ENCODE measurements at regions of chr4 and their contacts with region 1.

Region 1: GRCh38 chr4:10157478-10158332 is 41.1 kb upstream of the WDR1 start:
- DNase-seq: peak; percentile 60
- ATAC-seq: peak; percentile 73
- H3K4me3 Mint-ChIP-seq: no peak overlapping the region
- H3K27ac Mint-ChIP-seq: no peak overlapping the region
- H3K4me1 Mint-ChIP-seq: peaks cover 30% of the 10 kb centered on the region
- H3K27me3 Mint-ChIP-seq: no peaks in the 10 kb centered on the region
- CTCF ChIP-seq: peak; percentile 79

Region 2: DNA sequence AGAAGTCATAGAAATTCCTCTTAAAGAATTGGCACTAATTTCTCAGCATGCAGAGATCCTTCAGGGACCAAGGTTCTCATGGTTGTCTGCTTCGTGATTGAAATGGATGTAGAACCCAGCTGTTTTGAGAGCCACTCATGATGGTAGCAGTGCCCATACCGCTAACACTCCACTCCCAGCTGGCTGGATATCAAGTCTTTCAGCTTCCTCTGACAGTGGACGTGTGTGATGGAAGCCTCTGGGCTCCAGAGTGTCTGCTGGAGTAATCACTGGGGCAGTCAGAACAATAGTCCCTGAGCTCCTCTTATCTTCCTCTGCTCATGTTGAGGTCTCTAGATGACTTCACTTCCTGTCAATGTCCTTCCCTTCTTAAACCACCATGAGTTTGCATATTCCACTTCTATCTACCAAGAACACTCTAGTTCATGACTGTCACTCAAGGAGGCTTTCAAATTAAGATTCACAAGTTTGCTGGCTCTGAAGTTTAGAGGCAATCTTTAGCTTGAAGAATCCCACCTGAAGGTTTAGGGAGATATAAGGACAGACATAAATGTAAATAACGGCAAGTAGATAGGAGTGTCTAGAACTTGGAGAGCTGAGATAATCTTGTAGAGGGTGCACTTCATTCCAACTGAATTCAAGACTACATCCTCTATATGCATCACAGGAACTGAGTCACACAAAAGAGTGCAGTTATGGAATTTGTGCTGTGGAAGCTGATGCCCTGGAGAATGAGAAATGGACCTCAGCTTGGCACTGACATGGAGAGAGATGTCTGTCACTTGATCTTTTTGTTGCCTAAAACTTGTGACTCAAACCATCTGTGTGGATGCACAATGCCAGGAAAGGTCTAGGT is 23.4 kb after region 1 on chr4:
- CTCF ChIA-PET with region 1: interaction called, 11 read pairs
- POLR2A ChIA-PET with region 1: interaction called, 3 read pairs
- intact Hi-C with region 1: no loop called
- DNase-seq: peak; percentile 61
- ATAC-seq: peak; percentile 94
- H3K4me3 Mint-ChIP-seq: peak overlapping the region; percentile 16
- H3K27ac Mint-ChIP-seq: peak overlapping the region; percentile 93
- H3K4me1 Mint-ChIP-seq: peaks cover 32% of the 10 kb centered on the region
- H3K27me3 Mint-ChIP-seq: no peaks in the 10 kb centered on the region
- CTCF ChIP-seq: no peak

Region 3: DNA sequence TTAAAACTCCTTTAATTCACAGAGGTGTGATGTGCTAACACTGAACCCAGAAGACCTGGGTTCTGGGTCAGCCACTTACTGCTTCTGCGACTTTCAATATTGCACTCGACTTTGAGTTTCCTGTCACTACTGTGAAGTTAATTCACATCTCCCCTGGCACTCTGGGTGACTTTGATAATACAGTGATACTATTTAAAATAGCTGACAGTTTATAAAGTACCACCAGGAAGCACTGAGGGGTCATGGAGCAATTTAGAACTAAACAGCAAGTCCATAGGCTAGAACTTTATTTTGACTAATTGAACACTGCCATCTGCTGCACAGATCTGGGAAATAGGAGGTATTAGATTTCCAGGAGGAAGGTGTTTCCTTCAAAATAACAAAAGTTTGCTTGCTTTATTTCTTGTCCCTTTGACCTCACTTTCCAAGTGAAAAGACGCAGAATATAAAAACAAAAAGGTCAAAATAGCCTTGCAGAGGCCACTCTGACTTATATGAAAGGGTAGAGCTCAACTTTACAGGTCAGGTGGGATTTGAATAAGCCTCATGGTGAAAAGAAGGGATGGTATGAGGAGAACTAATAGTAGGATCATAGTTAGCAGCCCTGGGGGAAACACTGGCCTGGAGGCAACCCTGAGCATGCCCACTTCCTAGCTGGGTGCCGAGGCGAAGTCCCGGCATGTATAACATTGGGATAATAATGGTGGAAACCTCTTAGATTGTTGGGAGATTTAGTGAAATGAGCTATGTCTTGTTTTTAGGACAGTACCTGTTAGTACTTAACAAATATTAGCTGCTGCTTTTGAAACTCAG is 246.1 kb after region 1 on chr4:
- CTCF ChIA-PET with region 1: interaction called, 24 read pairs
- POLR2A ChIA-PET with region 1: no interaction called
- intact Hi-C with region 1: loop called (anchors 2 kb)
- DNase-seq: peak; percentile 17
- ATAC-seq: no peak
- H3K4me3 Mint-ChIP-seq: no peak overlapping the region
- H3K27ac Mint-ChIP-seq: no peak overlapping the region
- H3K4me1 Mint-ChIP-seq: no peaks in the 10 kb centered on the region
- H3K27me3 Mint-ChIP-seq: no peaks in the 10 kb centered on the region
- CTCF ChIP-seq: peak; percentile 72

Region 4: GRCh38 chr4:10506077-10506476 is 348.4 kb after region 1 on chr4:
- CTCF ChIA-PET with region 1: no interaction called
- POLR2A ChIA-PET with region 1: no interaction called
- intact Hi-C with region 1: no loop called
- DNase-seq: no peak
- ATAC-seq: no peak
- H3K4me3 Mint-ChIP-seq: no peak overlapping the region
- H3K27ac Mint-ChIP-seq: no peak overlapping the region
- H3K4me1 Mint-ChIP-seq: peaks cover 5% of the 10 kb centered on the region
- H3K27me3 Mint-ChIP-seq: no peaks in the 10 kb centered on the region
- CTCF ChIP-seq: no peak

Region 5: DNA sequence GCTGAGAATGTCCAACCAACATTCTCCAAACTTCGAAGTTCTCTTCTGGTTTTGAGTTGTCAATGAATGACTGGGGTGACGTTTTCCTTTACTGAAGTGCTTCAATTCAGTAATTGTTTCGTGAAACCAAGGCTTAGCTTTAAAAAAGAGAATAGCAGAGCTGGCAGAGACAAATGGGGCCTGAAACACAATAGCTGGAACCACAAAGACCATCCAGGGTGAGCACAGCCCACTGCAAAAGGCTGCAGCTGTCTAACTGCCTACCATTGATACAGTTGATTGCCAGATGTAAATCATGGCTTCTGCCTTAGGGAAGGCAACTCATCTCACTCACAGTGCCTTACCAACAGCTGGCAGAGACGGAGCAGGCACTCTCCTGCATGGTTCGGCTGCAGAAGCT is 378.2 kb after region 1 on chr4:
- CTCF ChIA-PET with region 1: interaction called, 34 read pairs
- POLR2A ChIA-PET with region 1: no interaction called
- intact Hi-C with region 1: loop called (anchors 5 kb)
- DNase-seq: no peak
- ATAC-seq: no peak
- H3K4me3 Mint-ChIP-seq: no peak overlapping the region
- H3K27ac Mint-ChIP-seq: no peak overlapping the region
- H3K4me1 Mint-ChIP-seq: no peaks in the 10 kb centered on the region
- H3K27me3 Mint-ChIP-seq: no peaks in the 10 kb centered on the region
- CTCF ChIP-seq: no peak

Region 6: DNA sequence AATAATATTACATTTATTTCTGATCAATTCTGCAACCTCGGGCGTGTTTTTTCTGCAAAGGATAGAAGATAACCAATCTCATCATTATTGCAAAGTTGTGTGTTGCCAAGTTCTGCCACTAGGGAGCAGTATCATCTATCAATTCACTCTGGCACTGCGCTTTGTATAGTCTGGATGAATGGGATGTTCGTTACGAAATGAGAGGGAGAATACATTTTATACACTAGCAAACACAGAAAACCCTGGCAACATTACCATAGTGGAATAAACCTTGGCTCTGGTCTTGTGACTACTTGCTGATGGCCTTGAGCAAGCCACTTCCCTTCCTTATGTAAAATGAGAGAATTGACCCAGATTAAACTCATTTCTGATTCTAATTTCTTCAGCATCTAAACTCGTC is 397.0 kb after region 1 on chr4:
- CTCF ChIA-PET with region 1: interaction called, 12 read pairs
- POLR2A ChIA-PET with region 1: no interaction called
- intact Hi-C with region 1: loop called (anchors 5 kb)
- DNase-seq: peak; percentile 65
- ATAC-seq: peak; percentile 69
- H3K4me3 Mint-ChIP-seq: no peak overlapping the region
- H3K27ac Mint-ChIP-seq: no peak overlapping the region
- H3K4me1 Mint-ChIP-seq: peaks cover 6% of the 10 kb centered on the region
- H3K27me3 Mint-ChIP-seq: peaks cover 6% of the 10 kb centered on the region
- CTCF ChIP-seq: peak; percentile 78

Measured in activated CD8-positive, alpha-beta T cell treated with anti-CD3 and anti-CD28 coated beads for 36 hours (primary cell).